Activated CD8-positive, alpha-beta memory T cell treated with anti-CD3 and anti-CD28 coated beads, Interleukin-2, amount 10 ng/mL, durations not matched to agents 7 days and 5 days (primary cell): ENCODE measurements at regions of chr21 and their contacts with region 1.

Region 1: DNA sequence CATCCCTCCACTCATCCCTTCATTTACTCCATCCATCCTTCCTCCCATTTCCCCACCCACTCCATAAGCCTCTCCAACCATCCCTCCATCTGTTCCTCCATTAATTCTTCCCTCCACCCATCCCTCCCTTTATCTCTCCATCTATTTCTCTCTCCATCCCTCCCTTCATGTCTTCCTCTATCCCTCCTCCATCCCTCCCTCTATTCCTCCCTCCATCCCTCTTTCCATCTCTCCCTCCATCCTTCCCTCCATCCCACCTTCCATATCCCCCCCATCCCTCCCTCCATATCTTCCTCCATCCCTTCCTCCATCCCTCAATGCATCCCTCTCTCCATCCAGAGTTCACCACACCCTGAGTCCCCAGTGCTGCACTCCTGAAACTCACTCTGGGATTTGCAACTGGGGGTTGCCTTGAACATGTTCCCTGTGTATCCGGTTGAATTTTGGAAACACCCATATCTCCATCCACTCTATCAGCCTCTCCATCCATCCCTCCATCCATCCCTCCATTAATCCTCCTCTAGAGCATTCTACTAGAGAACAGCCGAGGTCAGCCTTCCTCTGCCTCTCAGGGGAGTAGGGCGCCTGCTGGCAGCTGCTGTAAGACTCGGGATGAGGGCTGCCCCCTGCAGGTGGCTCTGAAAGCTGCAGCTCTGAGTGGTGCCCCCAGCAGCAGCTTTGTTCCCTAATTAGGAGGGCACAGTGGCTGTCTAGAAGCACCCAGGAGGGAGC is 39.4 kb downstream of the ABCG1 start:
- DNase-seq: peak; percentile 87
- ATAC-seq: peak; percentile 96
- H3K4me3 Mint-ChIP-seq: no peak overlapping the region
- H3K27ac Mint-ChIP-seq: no peak overlapping the region
- H3K4me1 Mint-ChIP-seq: peaks cover 3% of the 10 kb centered on the region
- H3K27me3 Mint-ChIP-seq: peaks cover 2% of the 10 kb centered on the region

Region 2: DNA sequence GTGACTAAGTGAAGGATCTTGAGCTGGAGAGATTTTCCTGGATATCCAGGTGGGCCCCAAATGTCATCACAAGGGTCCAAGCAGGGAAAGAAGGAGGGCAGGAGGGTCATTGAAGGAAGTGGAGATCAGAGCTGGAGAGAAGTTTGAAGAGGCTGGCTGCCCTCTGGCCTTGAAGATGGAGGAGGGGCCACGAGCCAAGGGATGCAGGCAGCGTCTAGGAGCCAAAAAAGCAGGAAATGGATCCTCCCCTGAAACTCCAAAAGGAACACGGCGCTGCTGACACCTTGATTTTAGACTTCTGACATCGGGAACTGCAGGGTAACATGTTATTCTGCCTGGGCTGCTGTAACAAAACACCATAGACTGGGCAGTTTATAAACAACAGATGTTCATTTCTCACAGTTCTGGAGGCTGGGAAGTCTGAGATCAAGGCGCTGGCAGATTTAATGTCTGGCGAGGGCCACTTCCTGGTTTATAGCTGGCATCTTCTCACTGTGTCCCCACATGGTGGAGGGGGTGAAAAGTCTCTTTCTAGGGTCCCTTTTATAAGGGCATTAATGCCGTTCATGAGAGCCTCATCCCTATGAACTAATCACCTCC is 219.4 kb before region 1 on chr21:
- CTCF ChIA-PET with region 1: no interaction called
- DNase-seq: no peak
- ATAC-seq: no peak
- H3K4me3 Mint-ChIP-seq: no peak overlapping the region
- H3K27ac Mint-ChIP-seq: no peak overlapping the region
- H3K4me1 Mint-ChIP-seq: no peaks in the 10 kb centered on the region
- H3K27me3 Mint-ChIP-seq: no peaks in the 10 kb centered on the region

Region 3: GRCh38 chr21:42164064-42164789 is 94.1 kb before region 1 on chr21:
- CTCF ChIA-PET with region 1: interaction called, 106 read pairs
- DNase-seq: peak; percentile 80
- ATAC-seq: peak; percentile 89
- H3K4me3 Mint-ChIP-seq: no peak overlapping the region
- H3K27ac Mint-ChIP-seq: no peak overlapping the region
- H3K4me1 Mint-ChIP-seq: peaks cover 25% of the 10 kb centered on the region
- H3K27me3 Mint-ChIP-seq: peaks cover under 1% of the 10 kb centered on the region

Region 4: GRCh38 chr21:42220138-42220701 is 38.1 kb before region 1 on chr21:
- CTCF ChIA-PET with region 1: interaction called, 29 read pairs
- DNase-seq: peak; percentile 82
- ATAC-seq: peak; percentile 80
- H3K4me3 Mint-ChIP-seq: peak overlapping the region; percentile 80
- H3K27ac Mint-ChIP-seq: peak overlapping the region; percentile 89
- H3K4me1 Mint-ChIP-seq: peaks cover 9% of the 10 kb centered on the region
- H3K27me3 Mint-ChIP-seq: no peaks in the 10 kb centered on the region

Region 5: GRCh38 chr21:42233067-42233961 is 25.0 kb before region 1 on chr21:
- CTCF ChIA-PET with region 1: interaction called, 64 read pairs
- DNase-seq: peak; percentile 90
- ATAC-seq: peak; percentile 56
- H3K4me3 Mint-ChIP-seq: peak overlapping the region; percentile 23
- H3K27ac Mint-ChIP-seq: peak overlapping the region; percentile 89
- H3K4me1 Mint-ChIP-seq: peaks cover 88% of the 10 kb centered on the region
- H3K27me3 Mint-ChIP-seq: no peaks in the 10 kb centered on the region

Region 6: DNA sequence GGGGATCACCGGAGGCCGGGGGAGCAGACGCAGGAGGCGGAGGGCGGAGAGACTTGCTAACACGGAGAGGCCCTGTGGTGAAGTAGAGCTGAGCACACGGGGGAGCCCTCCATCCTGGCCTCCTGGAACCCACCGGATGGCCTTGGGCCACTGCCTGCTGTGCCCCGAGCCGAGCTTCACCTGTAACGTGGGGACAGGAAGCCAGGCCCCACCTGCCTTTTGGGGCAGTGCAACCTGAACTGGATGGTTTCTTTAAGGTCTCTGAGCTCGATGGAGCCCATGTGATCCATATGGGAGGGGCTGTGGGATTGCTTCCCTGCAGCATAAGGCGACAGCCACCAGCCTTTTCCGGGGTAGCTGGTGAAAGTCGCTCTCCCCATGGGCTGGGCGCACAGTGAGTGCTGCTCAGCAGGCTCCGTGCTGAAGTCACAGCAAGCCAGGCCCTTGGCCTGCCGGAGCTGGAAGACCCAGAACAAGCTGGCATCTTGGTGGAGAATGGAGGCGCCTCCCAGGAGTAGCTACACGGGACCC is 21.1 kb after region 1 on chr21:
- CTCF ChIA-PET with region 1: interaction called, 12 read pairs
- DNase-seq: no peak
- ATAC-seq: no peak
- H3K4me3 Mint-ChIP-seq: no peak overlapping the region
- H3K27ac Mint-ChIP-seq: no peak overlapping the region
- H3K4me1 Mint-ChIP-seq: no peaks in the 10 kb centered on the region
- H3K27me3 Mint-ChIP-seq: no peaks in the 10 kb centered on the region